ENCODE measurements at regions of chr6 and their contacts with region 1.

Region 1: DNA sequence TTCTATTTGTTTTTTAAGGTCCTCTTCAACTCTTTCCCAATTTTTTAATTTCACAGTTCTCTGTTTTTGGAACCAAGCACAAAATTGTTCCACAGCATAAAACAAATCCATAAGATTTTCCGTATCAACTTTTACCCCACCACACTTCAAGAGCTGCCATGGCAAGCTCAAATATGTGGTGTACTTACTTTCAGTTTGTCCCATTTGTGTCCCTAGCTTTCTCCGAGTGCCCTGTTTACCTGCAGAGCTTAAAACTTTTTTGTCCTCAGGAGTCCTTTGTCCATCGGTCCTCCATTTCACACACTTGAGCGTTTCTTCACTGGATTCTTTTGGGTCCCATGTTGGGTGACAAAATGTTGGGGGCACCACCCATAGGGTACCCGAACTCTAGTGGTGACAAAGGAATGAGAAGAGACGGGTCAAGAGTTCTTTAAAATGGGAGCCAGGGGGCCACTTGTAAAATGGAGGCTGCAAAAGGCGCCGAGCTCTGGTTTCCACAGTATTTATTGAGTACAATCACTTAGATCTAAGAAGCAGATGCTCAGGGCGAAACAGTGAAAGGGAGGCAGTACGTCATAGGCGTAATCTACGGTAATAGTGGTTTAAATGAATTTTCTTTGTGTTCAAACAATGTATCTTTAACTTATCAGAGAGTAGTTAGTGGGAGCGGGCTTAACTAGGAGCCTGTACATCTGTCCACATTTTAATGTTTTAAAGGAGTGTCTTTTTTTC is 39.8 kb upstream of the SERINC1 start:
- DNase-seq: no peak
- ATAC-seq: no peak
- H3K4me3 ChIP-seq: no peak overlapping the region
- H3K27ac ChIP-seq: no peak overlapping the region
- H3K4me1 ChIP-seq: no peaks in the 10 kb centered on the region
- H3K27me3 ChIP-seq: no peaks in the 10 kb centered on the region

Region 2: GRCh38 chr6:121112356-121112755 is 1399.0 kb before region 1 on chr6:
- intact Hi-C with region 1: loop called in 1 of 2 experiments (anchors 10 kb)
- DNase-seq: no peak
- ATAC-seq: no peak
- H3K4me3 ChIP-seq: no peak overlapping the region
- H3K27ac ChIP-seq: no peak overlapping the region
- H3K4me1 ChIP-seq: no peaks in the 10 kb centered on the region
- H3K27me3 ChIP-seq: no peaks in the 10 kb centered on the region

Region 3: GRCh38 chr6:122459213-122459612 is 52.1 kb before region 1 on chr6:
- intact Hi-C with region 1: no loop called
- DNase-seq: no peak
- ATAC-seq: no peak
- H3K4me3 ChIP-seq: no peak overlapping the region
- H3K27ac ChIP-seq: no peak overlapping the region
- H3K4me1 ChIP-seq: peaks cover 2 to 10% of the 10 kb centered on the region in 2 donors
- H3K27me3 ChIP-seq: no peaks in the 10 kb centered on the region